RWPE1 (cell line): ENCODE measurements at regions of chr20 and their contacts with region 1.

Region 1: DNA sequence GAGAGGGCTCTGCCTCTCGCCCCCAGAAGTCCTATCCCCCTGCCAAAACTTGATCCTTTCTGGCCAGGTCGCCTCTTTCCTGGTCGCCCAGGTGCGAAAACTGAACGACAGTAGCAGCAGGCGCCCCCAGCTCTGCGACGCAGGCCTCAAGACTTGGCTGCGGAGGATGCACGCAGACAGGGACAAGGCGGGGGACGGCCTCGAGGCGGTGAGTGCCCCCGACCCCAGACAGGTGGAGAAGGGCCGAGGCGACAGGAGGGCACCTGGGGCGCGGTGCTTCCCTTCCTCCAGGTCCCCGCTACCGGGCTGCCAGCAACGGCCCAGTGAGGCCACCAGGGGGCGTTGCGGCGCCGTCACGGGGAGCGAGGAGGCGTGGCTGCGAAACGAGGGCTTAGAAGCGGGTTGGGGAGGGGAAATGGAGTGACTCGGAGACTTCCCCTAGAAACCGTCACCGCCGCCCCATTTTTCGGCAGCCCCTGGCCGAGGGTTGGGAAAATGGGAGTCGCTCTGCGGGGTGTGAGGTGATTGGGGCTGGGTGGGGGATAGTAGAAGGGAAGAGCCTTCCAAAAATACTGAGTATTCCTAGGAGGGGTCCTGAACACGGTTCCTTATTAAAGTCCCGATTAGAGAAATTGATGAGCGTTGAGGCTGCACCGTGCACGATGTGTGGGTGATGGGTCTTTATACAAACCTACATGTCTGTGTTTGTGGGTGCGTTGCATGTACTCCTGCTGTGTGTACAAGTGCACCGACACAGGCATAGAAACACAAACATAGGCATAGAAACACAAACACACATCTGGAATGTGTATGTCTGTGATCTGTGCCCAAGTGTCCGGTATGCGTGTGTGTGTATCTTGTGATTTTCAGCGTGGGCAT is 44.6 kb downstream of the ARHGAP40 start:
- DNase-seq: peak; percentile 95
- H3K27ac ChIP-seq: no peak overlapping the region
- CTCF ChIP-seq: peak; percentile 100

Region 2: GRCh38 chr20:38387953-38388352 is 258.3 kb before region 1 on chr20:
- CTCF ChIA-PET with region 1: no interaction called
- POLR2A ChIA-PET with region 1: no interaction called
- DNase-seq: no peak
- H3K27ac ChIP-seq: no peak overlapping the region
- CTCF ChIP-seq: no peak

Region 3: DNA sequence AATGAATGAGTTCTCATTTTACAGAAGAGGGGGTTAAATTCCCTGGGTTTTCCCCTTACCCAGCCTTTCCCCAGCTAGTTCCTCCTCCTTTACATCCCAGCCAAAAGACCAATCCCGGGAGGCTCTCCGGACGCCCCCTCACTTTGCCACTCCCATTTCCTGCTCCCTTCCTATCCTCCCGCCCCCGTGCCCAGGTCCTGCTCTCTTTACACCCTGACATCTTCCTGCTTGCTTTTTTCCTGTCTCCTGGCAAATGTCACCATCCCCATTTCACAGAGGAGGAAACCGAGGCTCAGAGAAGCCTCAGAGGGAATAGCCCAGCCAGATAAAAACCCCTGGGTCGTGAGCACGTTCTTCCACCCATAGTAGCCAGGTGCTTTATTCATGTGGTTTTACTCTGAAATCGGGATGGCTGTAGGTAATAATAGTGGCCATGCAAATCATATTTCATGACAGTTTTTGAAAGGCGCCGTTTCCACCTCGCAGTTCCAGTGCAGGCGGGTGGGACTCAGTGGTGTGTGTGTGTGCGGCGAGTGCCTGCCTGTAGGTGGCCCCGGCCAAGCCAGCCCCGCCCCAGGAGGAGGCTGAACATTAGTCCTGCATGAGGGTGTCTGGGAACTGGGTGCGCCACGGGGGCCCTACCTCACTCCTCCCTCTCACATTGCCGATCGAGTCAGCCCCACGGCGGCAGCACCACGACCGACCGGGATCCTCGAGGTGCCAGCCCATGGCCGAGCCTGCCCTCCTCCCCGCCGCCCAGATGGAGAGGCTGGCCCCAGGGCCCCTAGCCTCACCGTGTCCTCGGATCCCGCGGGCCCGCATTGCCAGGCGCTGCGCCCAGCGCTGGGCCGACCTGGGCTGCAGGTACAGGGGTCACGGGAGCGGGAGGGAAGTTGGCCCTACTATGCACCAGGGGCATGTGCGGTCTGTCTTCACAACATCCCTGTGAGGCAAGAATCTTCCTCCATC is 44.7 kb before region 1 on chr20 and contains the start of gene ARHGAP40:
- CTCF ChIA-PET with region 1: no interaction called
- POLR2A ChIA-PET with region 1: no interaction called
- DNase-seq: peak; percentile 80
- H3K27ac ChIP-seq: no peak within 1 kb of the TSS
- CTCF ChIP-seq: no peak

Region 4: GRCh38 chr20:38633577-38634093 is 12.6 kb before region 1 on chr20:
- CTCF ChIA-PET with region 1: interaction called, 12 read pairs
- POLR2A ChIA-PET with region 1: no interaction called
- DNase-seq: peak; percentile 88
- H3K27ac ChIP-seq: no peak overlapping the region
- CTCF ChIP-seq: peak; percentile 99

Region 5: GRCh38 chr20:38658879-38659596 is 12.8 kb after region 1 on chr20:
- CTCF ChIA-PET with region 1: interaction called, 35 read pairs
- POLR2A ChIA-PET with region 1: no interaction called
- DNase-seq: peak; percentile 88
- H3K27ac ChIP-seq: no peak overlapping the region
- CTCF ChIP-seq: peak; percentile 86

Region 6: DNA sequence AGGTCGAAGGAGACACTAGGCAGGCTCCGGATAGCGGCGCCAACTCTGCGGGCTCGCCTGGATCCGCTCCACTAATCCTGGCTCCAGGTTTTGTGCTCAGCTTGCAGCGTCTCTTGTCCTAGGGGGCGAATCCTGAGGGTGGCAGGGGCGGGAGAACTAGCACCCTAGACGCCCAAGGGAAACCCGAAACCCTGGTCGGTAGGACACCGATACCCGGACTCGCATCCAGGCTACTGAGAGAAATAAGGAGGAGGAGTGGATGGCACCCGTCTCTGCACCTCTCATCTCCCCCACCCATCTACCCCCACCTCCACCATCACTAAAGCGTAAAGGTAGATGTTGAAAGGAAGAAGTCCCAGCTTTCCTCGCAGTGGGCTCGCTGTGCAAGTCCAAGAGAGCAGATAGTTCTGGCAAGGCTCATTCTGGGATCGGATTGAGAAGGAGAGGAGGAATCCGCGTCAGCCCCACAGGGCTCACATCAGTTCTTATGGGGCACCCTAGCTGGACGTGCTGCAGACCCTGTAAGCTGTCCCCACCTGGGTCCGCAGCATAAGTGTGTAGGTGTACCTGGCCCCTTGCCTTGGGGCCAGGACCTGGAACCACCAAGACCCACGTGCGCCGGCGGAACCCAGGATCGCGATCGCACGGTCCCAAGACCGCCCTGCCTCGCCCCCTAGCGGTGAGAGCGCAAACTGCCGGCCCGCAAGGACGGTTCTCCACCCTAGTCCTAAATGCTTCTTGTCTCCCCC is 84.9 kb after region 1 on chr20:
- CTCF ChIA-PET with region 1: interaction called, 10 read pairs
- POLR2A ChIA-PET with region 1: no interaction called
- DNase-seq: peak; percentile 87
- H3K27ac ChIP-seq: no peak overlapping the region
- CTCF ChIP-seq: peak; percentile 100